ENCODE measurements at regions of chr6 and their contacts with region 1.

Region 1: GRCh38 chr6:5517796-5518195 is 256.5 kb downstream of the FARS2 start:
- DNase-seq: peak; percentile 63
- ATAC-seq: peak; percentile 81
- H3K4me3 Mint-ChIP-seq: peak overlapping the region; percentile 35
- H3K27ac Mint-ChIP-seq: peak overlapping the region; percentile 78
- H3K4me1 Mint-ChIP-seq: peaks cover 45% of the 10 kb centered on the region
- H3K27me3 Mint-ChIP-seq: no peaks in the 10 kb centered on the region

Region 2: DNA sequence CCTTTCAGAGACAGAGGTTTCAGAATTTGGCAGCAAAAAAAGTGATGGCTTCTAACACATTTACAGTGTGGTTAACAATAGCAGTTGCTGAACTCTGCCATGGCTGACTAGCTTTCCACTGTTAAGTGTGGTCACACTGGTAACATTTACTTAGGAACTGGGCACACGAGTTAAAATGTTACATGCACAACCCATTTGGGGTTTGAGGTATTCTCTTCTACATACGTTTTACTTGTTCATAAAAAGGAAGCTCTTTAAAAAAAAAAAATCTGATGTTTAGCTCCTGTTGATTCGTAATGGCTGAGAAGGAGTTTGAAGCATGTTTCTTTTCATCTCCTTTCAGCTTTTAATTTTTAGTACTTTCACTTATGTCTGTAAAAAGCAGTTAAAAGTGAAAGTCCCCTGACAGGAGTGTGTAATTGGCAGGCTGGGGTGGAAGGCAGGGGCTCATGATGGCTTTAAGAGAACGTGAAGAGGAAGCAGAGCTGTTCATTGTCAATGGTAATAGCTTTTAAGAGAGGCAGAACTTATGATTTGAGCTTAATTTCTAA is 10.6 kb before region 1 on chr6:
- CTCF ChIA-PET with region 1: interaction called, 22 read pairs
- POLR2A ChIA-PET with region 1: no interaction called
- DNase-seq: peak; percentile 32
- ATAC-seq: peak; percentile 74
- H3K4me3 Mint-ChIP-seq: peak overlapping the region; percentile 49
- H3K27ac Mint-ChIP-seq: peak overlapping the region; percentile 48
- H3K4me1 Mint-ChIP-seq: peaks cover 20% of the 10 kb centered on the region
- H3K27me3 Mint-ChIP-seq: no peaks in the 10 kb centered on the region

Region 3: GRCh38 chr6:5553767-5554166 is 36.0 kb after region 1 on chr6:
- CTCF ChIA-PET with region 1: no interaction called
- POLR2A ChIA-PET with region 1: no interaction called
- DNase-seq: no peak
- ATAC-seq: no peak
- H3K4me3 Mint-ChIP-seq: no peak overlapping the region
- H3K27ac Mint-ChIP-seq: no peak overlapping the region
- H3K4me1 Mint-ChIP-seq: no peaks in the 10 kb centered on the region
- H3K27me3 Mint-ChIP-seq: no peaks in the 10 kb centered on the region